ENCODE measurements at regions of chr5 and their contacts with region 1.

Region 1: DNA sequence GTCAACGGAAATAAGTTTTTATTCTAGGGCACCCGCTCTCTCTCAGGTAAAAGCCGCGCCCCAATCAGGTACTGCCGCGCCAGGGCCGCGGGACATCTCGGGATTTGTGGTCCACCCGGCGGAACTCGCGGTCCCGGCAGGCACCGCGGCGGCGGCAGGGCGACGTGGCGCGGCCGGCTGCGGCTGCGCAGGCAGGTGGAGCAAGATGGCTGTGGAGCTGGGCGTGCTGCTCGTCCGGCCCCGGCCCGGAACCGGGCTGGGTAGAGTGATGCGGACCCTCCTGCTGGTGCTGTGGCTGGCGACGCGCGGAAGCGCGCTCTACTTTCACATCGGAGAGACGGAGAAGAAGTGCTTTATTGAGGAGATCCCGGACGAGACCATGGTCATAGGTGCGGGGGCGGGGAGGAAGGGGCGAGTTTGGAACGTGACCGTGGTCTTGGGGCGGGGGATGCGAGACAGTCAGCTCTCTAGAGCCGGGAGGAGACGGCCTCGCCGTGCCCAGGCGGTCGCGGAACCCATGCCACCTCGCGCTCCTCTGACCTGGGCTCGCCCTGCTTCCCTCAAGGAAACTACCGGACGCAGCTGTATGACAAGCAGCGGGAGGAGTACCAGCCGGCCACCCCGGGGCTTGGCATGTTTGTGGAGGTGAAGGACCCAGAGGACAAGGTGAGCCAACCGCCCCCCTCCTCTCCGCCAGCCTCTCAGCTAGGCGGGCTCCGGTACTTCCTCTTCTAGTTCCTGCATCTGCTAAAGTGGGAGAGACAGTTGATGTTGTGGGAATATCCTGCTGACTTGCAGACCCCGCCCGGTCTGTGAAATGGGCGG is at the start of gene TMED9:
- DNase-seq: peak; percentile 94
- ATAC-seq: peak; percentile 97
- H3K4me3 Mint-ChIP-seq: peak within 1 kb of the TSS; percentile 98
- H3K27ac Mint-ChIP-seq: peak within 1 kb of the TSS; percentile 99
- H3K4me1 Mint-ChIP-seq: peaks cover 29% of the 10 kb centered on the region
- H3K27me3 Mint-ChIP-seq: peaks cover 5% of the 10 kb centered on the region
- total RNA-seq, gene TMED9: 83.2 to 109 TPM

Region 2: GRCh38 chr5:177303121-177303924 is 288.9 kb before region 1 on chr5 and contains the starts of genes PRELID1 and RAB24:
- CTCF ChIA-PET with region 1: no interaction called
- POLR2A ChIA-PET with region 1: no interaction called
- intact Hi-C with region 1: loop called in 1 of 2 experiments (anchors 1 kb)
- DNase-seq: peak; percentile 95
- ATAC-seq: peak; percentile 69
- H3K4me3 Mint-ChIP-seq: peak within 1 kb of the TSS; percentile 93
- H3K27ac Mint-ChIP-seq: peak within 1 kb of the TSS; percentile 90
- H3K4me1 Mint-ChIP-seq: peaks cover 59% of the 10 kb centered on the region
- H3K27me3 Mint-ChIP-seq: no peaks in the 10 kb centered on the region
- total RNA-seq, gene PRELID1: 266 to 362 TPM
- total RNA-seq, gene RAB24: 10.9 to 21.0 TPM

Region 3: GRCh38 chr5:177516604-177517568 is 75.3 kb before region 1 on chr5 and contains the start of gene DDX41:
- CTCF ChIA-PET with region 1: interaction called, 3 read pairs
- POLR2A ChIA-PET with region 1: no interaction called
- intact Hi-C with region 1: loop called in 1 of 2 experiments (anchors 1 kb)
- DNase-seq: peak; percentile 98
- ATAC-seq: peak; percentile 91
- H3K4me3 Mint-ChIP-seq: peak within 1 kb of the TSS; percentile 98
- H3K27ac Mint-ChIP-seq: peak within 1 kb of the TSS; percentile 96
- H3K4me1 Mint-ChIP-seq: peaks cover 48% of the 10 kb centered on the region
- H3K27me3 Mint-ChIP-seq: no peaks in the 10 kb centered on the region
- total RNA-seq, gene DDX41: 192 to 197 TPM

Region 4: GRCh38 chr5:177554474-177555111 is 37.6 kb before region 1 on chr5 and contains the start of gene FAM193B:
- CTCF ChIA-PET with region 1: interaction called, 4 read pairs
- POLR2A ChIA-PET with region 1: no interaction called
- intact Hi-C with region 1: loop called (anchors 1 kb)
- DNase-seq: peak; percentile 98
- ATAC-seq: peak; percentile 99
- H3K4me3 Mint-ChIP-seq: peak within 1 kb of the TSS; percentile 80
- H3K27ac Mint-ChIP-seq: peak within 1 kb of the TSS; percentile 66
- H3K4me1 Mint-ChIP-seq: peaks cover 25% of the 10 kb centered on the region
- H3K27me3 Mint-ChIP-seq: no peaks in the 10 kb centered on the region
- total RNA-seq, gene FAM193B: 63.6 to 77.7 TPM

Region 5: DNA sequence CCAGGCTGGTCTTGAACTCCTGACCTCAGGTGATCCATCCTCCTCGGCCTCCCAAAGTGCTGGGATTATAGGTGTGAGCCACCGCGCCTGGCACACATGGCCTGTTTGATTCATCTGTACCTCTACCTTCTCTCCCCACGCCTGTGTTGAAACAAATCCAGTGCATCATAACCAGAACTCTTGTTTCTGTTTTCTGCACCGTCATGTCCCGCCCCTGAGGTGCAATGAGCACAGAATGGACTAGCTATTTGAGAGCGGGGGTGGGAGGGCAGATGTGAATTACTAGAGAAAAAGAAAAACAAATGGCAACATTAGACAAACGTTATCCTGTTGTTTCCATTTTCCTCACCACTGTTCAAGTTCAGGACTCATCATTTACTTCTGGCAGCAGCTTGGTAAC is 27.2 kb before region 1 on chr5:
- CTCF ChIA-PET with region 1: no interaction called
- POLR2A ChIA-PET with region 1: no interaction called
- intact Hi-C with region 1: no loop called
- DNase-seq: no peak
- ATAC-seq: no peak
- H3K4me3 Mint-ChIP-seq: no peak overlapping the region
- H3K27ac Mint-ChIP-seq: no peak overlapping the region
- H3K4me1 Mint-ChIP-seq: no peaks in the 10 kb centered on the region
- H3K27me3 Mint-ChIP-seq: no peaks in the 10 kb centered on the region

Region 6: DNA sequence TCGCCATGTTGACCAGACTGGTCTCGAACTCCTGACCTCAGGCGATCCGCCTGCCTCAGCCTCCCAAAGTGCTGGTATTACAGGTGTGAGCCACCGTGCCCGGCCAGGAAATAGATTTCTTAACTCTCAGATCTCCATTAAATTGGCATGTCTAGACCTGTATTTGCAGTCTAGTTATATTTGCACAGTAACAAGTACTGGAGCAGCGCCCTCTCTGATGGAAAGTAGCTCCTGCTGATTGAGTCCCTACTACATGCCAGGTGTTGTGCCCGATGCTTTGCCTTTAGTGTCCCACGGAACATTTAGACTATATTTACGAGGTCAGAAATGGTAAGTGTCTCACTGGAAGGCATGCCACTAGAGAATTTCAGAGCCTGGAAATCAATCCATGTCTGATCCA is 16.1 kb before region 1 on chr5:
- CTCF ChIA-PET with region 1: no interaction called
- POLR2A ChIA-PET with region 1: no interaction called
- intact Hi-C with region 1: no loop called
- DNase-seq: no peak
- ATAC-seq: no peak
- H3K4me3 Mint-ChIP-seq: no peak overlapping the region
- H3K27ac Mint-ChIP-seq: no peak overlapping the region
- H3K4me1 Mint-ChIP-seq: no peaks in the 10 kb centered on the region
- H3K27me3 Mint-ChIP-seq: no peaks in the 10 kb centered on the region